Prostate gland (tissue), 2 donors: ENCODE measurements at regions of chr2 and their contacts with region 1.

Region 1: GRCh38 chr2:98731041-98731893 is at the start of gene MGAT4A:
- DNase-seq: peak; percentile 58
- H3K4me3 ChIP-seq: peak within 1 kb of the TSS; percentile 77 to 87
- H3K27ac ChIP-seq: peak within 1 kb of the TSS; percentile 77 to 85
- H3K4me1 ChIP-seq: no peaks in the 10 kb centered on the region
- H3K27me3 ChIP-seq: no peaks in the 10 kb centered on the region
- CTCF ChIP-seq: peak in 1 of 4 experiments; percentile 13
- POLR2A ChIP-seq: peak; percentile 73
- total RNA-seq, gene MGAT4A: 14.0 to 20.4 TPM

Region 2: GRCh38 chr2:98476192-98476868 is 254.9 kb before region 1 on chr2:
- intact Hi-C with region 1: no loop called
- DNase-seq: peak; percentile 56
- H3K4me3 ChIP-seq: no peak overlapping the region
- H3K27ac ChIP-seq: no peak overlapping the region
- H3K4me1 ChIP-seq: peaks cover 5% of the 10 kb centered on the region
- H3K27me3 ChIP-seq: no peaks in the 10 kb centered on the region
- CTCF ChIP-seq: no peak
- POLR2A ChIP-seq: no peak

Region 3: GRCh38 chr2:98608116-98608999 is 122.9 kb before region 1 on chr2 and contains the starts of genes COA5 and UNC50:
- intact Hi-C with region 1: loop called (anchors 5 kb)
- DNase-seq: peak; percentile 86
- H3K4me3 ChIP-seq: peak within 1 kb of the TSS; percentile 94 to 98
- H3K27ac ChIP-seq: peak within 1 kb of the TSS; percentile 93 to 95
- H3K4me1 ChIP-seq: peaks cover 13% of the 10 kb centered on the region
- H3K27me3 ChIP-seq: no peaks in the 10 kb centered on the region
- CTCF ChIP-seq: peak in 1 of 4 experiments; percentile 26
- POLR2A ChIP-seq: peak; percentile 76
- total RNA-seq, gene COA5: 34.9 to 41.6 TPM
- total RNA-seq, gene UNC50: 42.5 to 49.9 TPM

Region 4: DNA sequence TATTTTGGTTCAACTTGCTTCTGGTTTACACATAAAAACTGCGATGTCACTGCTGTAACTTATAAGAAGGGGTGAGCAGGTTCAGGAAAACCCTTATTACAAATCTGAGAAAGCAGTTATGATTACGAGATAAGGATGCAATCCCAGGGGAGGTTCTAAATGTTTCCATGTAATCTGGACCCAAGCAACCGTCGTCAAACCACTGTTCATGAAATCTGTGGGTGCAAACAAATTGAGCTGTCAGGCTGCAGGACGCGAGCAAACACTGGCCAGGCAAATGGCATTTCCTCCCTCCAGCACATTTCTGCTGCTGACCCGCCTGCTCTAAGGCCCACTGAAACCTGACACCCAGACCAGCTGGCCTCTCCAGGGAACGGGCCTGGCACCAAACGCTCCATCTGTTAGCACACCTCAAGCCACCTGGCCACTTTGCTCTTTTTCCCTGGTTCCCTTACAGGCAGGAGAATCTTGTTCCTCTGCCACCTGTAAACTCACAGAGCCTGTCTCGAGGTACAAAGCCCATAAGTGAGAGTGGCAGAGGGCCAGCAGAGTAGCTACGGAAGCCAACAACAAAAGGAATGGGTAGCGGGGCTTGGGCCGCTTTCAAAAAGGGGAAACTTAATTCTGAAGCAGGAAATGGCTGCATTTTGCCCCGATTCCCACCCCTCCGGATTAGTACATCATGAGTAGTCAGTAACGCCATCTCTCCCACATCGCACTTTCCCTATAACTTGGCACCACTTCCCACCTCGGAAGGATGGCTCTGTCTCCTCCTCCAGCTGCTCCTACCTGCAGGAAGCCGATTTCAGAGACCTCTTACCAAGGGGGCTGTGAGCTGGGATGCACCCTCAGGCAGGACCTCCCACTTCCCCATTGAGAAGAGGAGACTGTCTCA is 178.3 kb after region 1 on chr2:
- intact Hi-C with region 1: no loop called
- DNase-seq: peak; percentile 79
- H3K4me3 ChIP-seq: no peak overlapping the region
- H3K27ac ChIP-seq: peak overlapping the region in 1 of 2 donors; percentile 30
- H3K4me1 ChIP-seq: no peaks in the 10 kb centered on the region
- H3K27me3 ChIP-seq: no peaks in the 10 kb centered on the region
- CTCF ChIP-seq: no peak
- POLR2A ChIP-seq: no peak